H1 (cell line): ENCODE measurements at regions of chr6 and their contacts with region 1.

Region 1: DNA sequence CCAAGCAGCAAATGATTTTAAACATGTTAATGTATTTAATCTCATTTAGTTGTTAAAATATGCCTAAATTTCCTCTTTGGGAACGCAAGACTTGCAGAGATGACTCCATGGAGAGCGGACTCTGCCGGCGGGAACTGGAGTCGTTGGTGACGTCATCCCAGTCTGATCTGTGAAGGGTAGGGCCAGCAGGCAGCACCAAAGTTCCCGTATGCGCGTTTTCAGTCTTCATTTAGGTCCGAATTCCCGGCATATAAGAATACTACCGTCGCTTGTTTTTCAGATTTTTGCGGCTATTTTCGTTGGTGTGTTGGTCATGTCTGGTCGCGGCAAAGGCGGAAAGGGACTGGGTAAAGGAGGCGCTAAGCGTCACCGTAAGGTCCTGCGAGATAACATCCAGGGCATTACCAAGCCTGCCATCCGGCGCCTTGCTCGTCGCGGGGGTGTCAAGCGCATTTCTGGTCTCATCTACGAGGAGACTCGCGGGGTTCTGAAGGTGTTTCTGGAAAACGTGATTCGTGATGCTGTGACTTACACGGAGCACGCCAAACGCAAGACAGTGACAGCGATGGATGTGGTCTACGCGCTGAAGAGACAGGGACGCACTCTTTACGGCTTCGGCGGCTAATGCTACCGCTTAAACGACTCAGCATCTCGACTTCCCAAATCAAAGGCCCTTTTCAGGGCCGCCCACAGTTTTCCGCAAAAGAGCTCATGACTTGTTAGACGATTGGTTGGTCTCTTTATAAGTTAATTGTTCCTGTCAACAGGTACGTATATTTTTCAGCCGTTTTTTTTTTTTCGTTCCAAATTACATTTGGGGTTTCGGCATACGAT is 117.3 kb downstream of the HFE start:
- DNase-seq: peak; percentile 88 to 97
- H3K4me3 ChIP-seq: peak overlapping the region; percentile 64 to 94 (median 82)
- H3K27ac ChIP-seq: peak overlapping the region; percentile 98
- H3K4me1 ChIP-seq: peaks cover 0 to 15% (median 5%) of the 10 kb centered on the region in 4 experiments; a peak in 6 of 7 replicates
- H3K27me3 ChIP-seq: no peaks in the 10 kb centered on the region
- CTCF ChIP-seq: peak in 1 of 3 experiments; percentile 18; a peak in 1 of 4 replicates
- EP300 ChIP-seq: peak; percentile 13 to 95; a peak in 2 of 3 replicates
- POLR2A ChIP-seq: peak; percentile 99 to 100
- RAD21 ChIP-seq: 0 out of 4 replicates have a peak, but pooled peaks of 1 of the 2 experiments have one; percentile 14

Region 2: DNA sequence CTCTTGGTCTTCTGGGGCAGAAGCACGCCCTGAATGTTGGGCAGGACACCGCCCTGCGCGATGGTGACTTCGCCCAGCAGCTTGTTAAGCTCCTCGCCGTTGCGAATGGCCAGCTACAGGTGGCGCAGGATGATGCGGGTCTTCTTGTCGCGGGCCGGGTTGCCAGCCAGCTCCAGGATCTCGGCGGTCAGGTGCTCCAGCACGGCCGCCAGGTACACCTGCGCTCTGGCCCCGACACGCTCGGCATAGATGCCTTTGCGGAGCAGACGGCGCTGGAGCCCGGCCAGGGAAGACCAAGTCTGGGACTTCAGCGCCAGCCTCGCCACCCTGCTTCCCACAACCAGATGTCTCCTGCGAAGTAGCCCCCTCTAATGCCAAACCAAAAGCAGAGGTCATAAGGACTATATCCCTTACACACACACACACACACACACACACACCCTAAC is 322.5 kb before region 1 on chr6:
- CTCF ChIA-PET with region 1: no interaction called
- POLR2A ChIA-PET with region 1: no interaction called
- DNase-seq: peak; percentile 57 to 72
- H3K4me3 ChIP-seq: peak overlapping the region in 3 of 4 experiments; percentile 0 to 44 (median 7); a peak in 4 of 8 replicates
- H3K27ac ChIP-seq: no peak overlapping the region
- H3K4me1 ChIP-seq: no peaks in the 10 kb centered on the region; a peak in 1 of 7 replicates
- H3K27me3 ChIP-seq: peaks cover 0 to 4% (median 0%) of the 10 kb centered on the region in 4 experiments; a peak in 1 of 7 replicates
- CTCF ChIP-seq: peak; percentile 21 to 47 (median 40)
- EP300 ChIP-seq: no peak
- POLR2A ChIP-seq: no peak
- RAD21 ChIP-seq: peak; percentile 19 to 42

Region 3: GRCh38 chr6:26240154-26241032 is 35.8 kb after region 1 on chr6:
- CTCF ChIA-PET with region 1: no interaction called
- POLR2A ChIA-PET with region 1: interaction called, 477 read pairs
- DNase-seq: peak in 1 of 2 experiments; percentile 78
- H3K4me3 ChIP-seq: peak overlapping the region; percentile 64 to 96 (median 87)
- H3K27ac ChIP-seq: peak overlapping the region; percentile 96
- H3K4me1 ChIP-seq: peaks cover 1 to 8% (median 4%) of the 10 kb centered on the region in 4 experiments; a peak in 6 of 7 replicates
- H3K27me3 ChIP-seq: no peaks in the 10 kb centered on the region
- CTCF ChIP-seq: no peak
- EP300 ChIP-seq: peak in 1 of 2 experiments; percentile 87; a peak in 1 of 3 replicates
- POLR2A ChIP-seq: peak; percentile 100
- RAD21 ChIP-seq: no peak

Region 4: DNA sequence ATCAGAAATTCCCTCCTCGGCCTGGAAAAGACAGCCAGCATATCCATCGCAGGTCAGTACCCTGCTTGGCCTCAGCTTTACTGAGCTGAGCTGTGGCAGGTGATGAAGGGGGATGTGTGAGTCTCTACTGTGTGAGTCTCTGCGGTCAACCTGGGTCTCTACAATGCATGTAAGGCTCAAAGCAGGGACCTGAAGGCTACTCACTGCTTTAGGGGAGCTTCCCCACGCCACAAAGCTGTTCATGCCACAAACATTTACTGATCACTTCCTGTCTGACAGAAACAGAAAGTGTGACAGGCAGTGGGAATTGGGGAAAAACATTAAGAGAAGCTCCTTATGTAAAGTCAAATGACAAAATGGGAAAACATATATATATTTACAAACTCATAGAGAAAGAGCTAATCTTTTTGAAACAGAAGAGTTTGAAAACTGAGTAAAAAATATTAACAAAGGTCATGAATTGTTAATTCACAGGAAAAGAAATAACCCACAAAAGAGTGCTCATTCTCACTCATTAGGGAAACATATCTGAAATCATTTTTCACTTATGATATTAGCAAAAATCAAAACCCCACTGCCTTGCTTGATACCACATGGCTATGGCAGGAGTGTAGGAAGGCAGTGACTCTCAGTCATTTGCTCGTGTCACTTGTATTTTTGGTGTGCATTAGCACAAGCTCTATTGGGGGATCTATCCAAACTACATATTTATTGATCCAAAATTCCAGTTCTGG is 241.6 kb after region 1 on chr6:
- CTCF ChIA-PET with region 1: no interaction called
- POLR2A ChIA-PET with region 1: no interaction called
- DNase-seq: no peak
- H3K4me3 ChIP-seq: no peak overlapping the region
- H3K27ac ChIP-seq: no peak overlapping the region
- H3K4me1 ChIP-seq: no peaks in the 10 kb centered on the region
- H3K27me3 ChIP-seq: no peaks in the 10 kb centered on the region
- CTCF ChIP-seq: no peak
- EP300 ChIP-seq: no peak
- POLR2A ChIP-seq: no peak
- RAD21 ChIP-seq: no peak